IMR-90 (cell line): ENCODE measurements at regions of chr11 and their contacts with region 1.

Region 1: GRCh38 chr11:125345421-125346178 is 150.5 kb downstream of the FEZ1 start:
- DNase-seq: peak; percentile 67
- ATAC-seq: peak; percentile 82
- H3K4me3 ChIP-seq: no peak overlapping the region
- H3K27ac ChIP-seq: no peak overlapping the region
- H3K4me1 ChIP-seq: peaks cover 2% of the 10 kb centered on the region; the same call in 1 of the 2 replicates
- H3K27me3 ChIP-seq: no peaks in the 10 kb centered on the region
- CTCF ChIP-seq: peak; percentile 89
- POLR2A ChIP-seq: no peak
- RAD21 ChIP-seq: peak; percentile 78

Region 2: DNA sequence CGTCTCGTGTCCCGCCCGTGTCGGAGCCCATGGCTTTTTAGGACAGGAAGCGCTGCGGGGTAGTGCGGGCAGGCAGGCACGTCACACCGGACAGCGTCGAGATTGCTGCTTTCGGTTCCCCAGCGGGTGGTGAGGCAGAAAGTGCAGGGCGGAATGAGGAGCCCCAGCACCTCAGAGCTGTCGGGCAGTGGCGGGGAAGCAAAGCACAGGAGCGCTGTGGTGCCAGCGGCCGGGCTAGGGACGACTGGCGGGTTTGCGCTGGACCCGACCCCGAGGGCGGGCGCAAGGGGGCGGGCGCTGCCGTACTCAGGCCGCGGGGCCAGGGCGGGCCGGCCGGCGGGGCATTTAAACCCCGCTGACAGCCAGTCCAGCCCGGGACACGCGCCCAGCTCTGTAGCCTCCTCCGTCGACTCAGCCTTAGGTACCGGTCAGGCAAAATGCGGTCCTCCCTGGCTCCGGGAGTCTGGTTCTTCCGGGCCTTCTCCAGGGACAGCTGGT is 282.6 kb before region 1 on chr11 and contains the start of gene SLC37A2:
- CTCF ChIA-PET with region 1: no interaction called
- POLR2A ChIA-PET with region 1: no interaction called
- dilution Hi-C with region 1: no loop called
- in situ Hi-C with region 1: no loop called
- intact Hi-C with region 1: no loop called
- DNase-seq: peak; percentile 54
- ATAC-seq: peak; percentile 97
- H3K4me3 ChIP-seq: peak within 1 kb of the TSS; percentile 75
- H3K27ac ChIP-seq: peak within 1 kb of the TSS; percentile 35
- H3K4me1 ChIP-seq: peaks cover 3% of the 10 kb centered on the region; the same call in 1 of the 2 replicates
- H3K27me3 ChIP-seq: no peaks in the 10 kb centered on the region
- CTCF ChIP-seq: 0 out of 2 replicates have a peak, but pooled peaks have one; percentile 22
- POLR2A ChIP-seq: peak; percentile 42
- RAD21 ChIP-seq: no peak
- total RNA-seq, gene SLC37A2: 0.72 and 0.83 TPM in 2 replicates

Region 3: DNA sequence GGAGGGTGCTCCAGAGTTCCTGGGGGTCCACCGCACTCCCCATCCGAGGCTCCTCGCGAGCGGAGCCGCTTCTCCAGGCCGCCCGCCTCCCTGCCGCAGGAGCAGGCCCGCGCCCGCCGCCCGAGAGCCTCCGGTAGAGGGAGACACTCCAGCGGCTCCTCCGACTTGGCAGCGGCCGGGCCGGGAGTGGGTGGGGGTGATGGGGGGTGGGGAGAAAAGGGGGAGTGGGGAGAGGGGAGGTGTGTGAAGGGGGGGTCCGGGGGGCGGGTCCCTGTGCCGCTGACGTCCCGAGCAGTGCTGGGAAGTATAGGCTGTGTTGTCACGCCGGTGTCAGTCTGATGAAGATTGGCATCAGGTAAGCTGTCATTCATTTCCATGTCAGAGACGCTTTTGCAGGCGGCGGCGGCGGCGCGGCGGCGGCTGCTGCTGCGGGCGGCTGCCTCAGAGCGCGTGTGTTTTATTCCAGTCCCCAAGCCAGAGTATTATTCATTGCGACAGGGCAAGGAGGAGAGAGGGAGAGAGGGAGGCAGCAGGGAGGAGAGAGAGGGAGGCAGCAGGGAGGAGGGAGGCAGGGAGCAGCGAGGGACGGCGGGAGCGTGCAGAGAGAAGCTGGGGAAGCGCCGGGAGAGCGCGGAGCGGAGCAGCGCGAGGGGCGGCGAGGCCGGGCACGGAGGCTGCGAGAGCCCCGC is 181.0 kb before region 1 on chr11 and contains the start of gene PKNOX2:
- CTCF ChIA-PET with region 1: interaction called, 8 read pairs
- POLR2A ChIA-PET with region 1: interaction called, 4 read pairs
- dilution Hi-C with region 1: no loop called
- in situ Hi-C with region 1: loop called (anchors 5 kb)
- intact Hi-C with region 1: loop called (anchors 1 kb)
- DNase-seq: peak; percentile 67
- ATAC-seq: peak; percentile 69
- H3K4me3 ChIP-seq: peak within 1 kb of the TSS; percentile 65
- H3K27ac ChIP-seq: peak within 1 kb of the TSS; percentile 80
- H3K4me1 ChIP-seq: peaks cover 5% of the 10 kb centered on the region
- H3K27me3 ChIP-seq: peaks cover 2% of the 10 kb centered on the region; the same call in 1 of the 2 replicates
- CTCF ChIP-seq: peak; percentile 66
- POLR2A ChIP-seq: no peak
- RAD21 ChIP-seq: peak; percentile 60
- total RNA-seq, gene PKNOX2: 0.72 and 1.1 TPM in 2 replicates

Region 4: DNA sequence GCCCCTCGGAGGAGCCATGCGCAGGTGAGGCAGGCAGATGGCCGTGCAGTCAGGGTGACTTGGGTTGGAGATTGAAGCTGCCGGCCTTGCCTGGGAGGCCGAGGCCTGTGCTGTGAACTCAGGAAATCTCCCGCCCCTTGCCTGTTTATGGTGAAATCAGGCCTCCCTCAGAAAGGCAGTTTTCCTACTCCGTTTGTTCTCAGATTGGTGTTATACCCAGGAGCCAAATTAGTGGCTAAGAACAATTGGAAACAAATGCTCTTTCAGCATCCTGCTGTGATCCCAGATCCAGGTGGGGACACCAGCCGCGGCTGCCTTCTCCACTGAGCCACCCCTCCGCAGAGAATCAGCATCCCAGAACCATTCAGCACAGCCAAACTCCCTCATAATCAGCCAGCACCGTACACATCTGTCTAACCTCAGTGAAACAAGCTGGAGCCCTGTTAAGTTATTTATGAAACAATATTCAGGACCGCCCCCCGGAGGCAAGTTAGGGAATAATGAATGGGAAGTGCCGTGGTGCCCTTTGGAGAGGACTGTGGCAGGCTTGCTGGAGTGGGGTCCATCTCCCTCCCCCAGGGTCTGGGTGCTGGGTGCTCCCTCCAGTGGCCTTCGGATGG is 121.1 kb before region 1 on chr11:
- CTCF ChIA-PET with region 1: interaction called, 5 read pairs
- POLR2A ChIA-PET with region 1: no interaction called
- dilution Hi-C with region 1: no loop called
- in situ Hi-C with region 1: no loop called
- intact Hi-C with region 1: loop called (anchors 5 kb)
- DNase-seq: peak; percentile 23
- ATAC-seq: peak; percentile 81
- H3K4me3 ChIP-seq: no peak overlapping the region
- H3K27ac ChIP-seq: no peak overlapping the region
- H3K4me1 ChIP-seq: no peaks in the 10 kb centered on the region
- H3K27me3 ChIP-seq: peaks cover 2% of the 10 kb centered on the region; the same call in 1 of the 2 replicates
- CTCF ChIP-seq: peak; percentile 36
- POLR2A ChIP-seq: no peak
- RAD21 ChIP-seq: peak; percentile 38; the same call in 1 of the 2 replicates